AG04449 (cell line): ENCODE measurements at regions of chr11 and their contacts with region 1.

Region 1: DNA sequence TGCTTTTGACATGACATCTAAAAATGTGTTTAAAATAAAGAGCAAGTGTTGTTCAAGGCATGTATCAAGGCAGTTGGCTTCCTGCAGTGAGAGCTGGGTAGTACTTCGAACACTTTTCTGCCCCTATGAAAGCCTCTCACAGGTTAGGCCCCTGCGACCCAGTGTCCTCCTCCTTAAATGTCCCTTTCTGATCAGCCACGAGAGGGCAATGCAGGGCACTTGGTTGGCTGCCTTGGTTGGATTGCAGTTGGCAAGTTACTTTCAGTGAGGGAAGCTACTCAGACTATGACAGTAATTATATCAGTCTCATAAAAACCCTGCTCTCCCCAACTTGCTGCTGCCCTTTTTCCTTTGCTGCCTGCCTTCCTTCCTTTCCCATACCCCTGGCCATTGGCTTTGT is 743.8 kb downstream of the NTM start:
- DNase-seq: no peak
- H3K4me3 ChIP-seq: no peak overlapping the region
- CTCF ChIP-seq: peak; percentile 39

Region 2: GRCh38 chr11:132099692-132100091 is 14.5 kb before region 1 on chr11:
- CTCF ChIA-PET with region 1: interaction called, 13 read pairs
- POLR2A ChIA-PET with region 1: interaction called, 6 read pairs
- DNase-seq: no peak
- H3K4me3 ChIP-seq: no peak overlapping the region
- CTCF ChIP-seq: peak; percentile 10

Region 3: DNA sequence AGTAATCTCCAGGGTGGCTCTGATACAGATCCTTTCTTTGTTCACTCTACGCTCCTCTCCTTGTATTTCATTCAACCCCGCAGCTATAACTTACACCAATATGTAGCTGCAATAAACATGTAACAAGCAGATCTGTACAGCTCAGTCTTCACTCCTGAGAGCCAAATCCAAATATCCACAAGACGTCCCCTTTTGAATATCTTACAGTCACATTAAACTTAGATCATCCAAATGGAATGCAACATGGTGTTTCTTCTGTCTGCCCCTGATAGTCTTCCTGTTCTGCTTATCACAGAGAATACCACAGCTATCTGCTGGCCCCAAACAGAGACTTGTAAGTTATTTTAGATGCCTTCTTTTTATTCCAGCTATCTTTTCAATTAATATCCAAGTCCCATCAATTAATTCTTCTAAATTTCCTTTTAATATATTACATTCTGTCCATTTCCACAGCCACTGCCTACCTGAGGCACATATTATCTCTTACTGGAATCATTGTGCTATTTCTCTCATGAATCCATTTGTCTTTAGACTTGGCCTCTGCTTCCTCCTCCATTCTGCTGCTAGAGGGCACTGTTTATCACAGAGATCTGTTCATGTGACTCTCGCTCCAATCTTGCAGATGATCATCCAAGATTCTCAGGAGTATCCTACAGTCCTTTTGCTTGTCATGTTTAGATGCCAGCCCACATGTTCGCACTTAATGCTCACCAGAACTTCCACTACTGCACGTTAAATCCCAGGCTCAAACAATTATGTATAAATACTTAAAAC is 164.8 kb after region 1 on chr11:
- CTCF ChIA-PET with region 1: no interaction called
- POLR2A ChIA-PET with region 1: no interaction called
- DNase-seq: no peak
- H3K4me3 ChIP-seq: no peak overlapping the region
- CTCF ChIP-seq: peak; percentile 57